Body of pancreas (tissue), 4 donors: ENCODE measurements at regions of chr2 and their contacts with region 1.

Region 1: DNA sequence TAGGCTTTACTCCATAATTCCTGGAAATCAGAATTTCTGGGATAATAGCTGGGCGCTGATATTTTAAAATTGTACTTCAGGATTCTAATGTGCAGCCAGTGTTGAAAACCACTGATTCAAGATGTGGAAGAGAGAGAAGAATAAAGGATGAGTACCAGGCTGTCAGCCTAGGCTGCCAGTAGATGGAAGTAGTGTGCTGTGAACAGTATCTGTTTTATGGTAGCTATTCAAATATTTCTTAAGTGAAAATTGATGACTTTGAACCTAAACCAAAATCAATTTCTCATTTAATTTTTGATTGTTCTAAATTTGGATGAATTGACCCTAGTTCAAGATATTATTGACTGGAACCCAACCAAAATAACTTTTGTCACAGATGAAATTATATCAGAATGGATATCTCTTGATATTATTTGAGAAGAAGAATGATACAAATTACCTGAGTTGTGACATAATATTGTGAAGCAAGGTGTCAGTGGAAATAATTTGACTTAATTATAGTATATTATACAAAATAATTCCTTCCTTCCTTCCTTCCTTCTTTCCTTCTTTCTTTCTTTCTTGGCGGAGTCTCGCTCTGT is 88.1 kb downstream of the COMMD1 start:
- DNase-seq: peak in 2 of 4 donors; percentile 29 to 41
- ATAC-seq: no peak
- H3K4me3 ChIP-seq: no peak overlapping the region
- H3K27ac ChIP-seq: no peak overlapping the region
- H3K4me1 ChIP-seq: no peaks in the 10 kb centered on the region
- H3K27me3 ChIP-seq: no peaks in the 10 kb centered on the region
- CTCF ChIP-seq: peak; percentile 15 to 64 (median 56)
- POLR2A ChIP-seq: no peak

Region 2: DNA sequence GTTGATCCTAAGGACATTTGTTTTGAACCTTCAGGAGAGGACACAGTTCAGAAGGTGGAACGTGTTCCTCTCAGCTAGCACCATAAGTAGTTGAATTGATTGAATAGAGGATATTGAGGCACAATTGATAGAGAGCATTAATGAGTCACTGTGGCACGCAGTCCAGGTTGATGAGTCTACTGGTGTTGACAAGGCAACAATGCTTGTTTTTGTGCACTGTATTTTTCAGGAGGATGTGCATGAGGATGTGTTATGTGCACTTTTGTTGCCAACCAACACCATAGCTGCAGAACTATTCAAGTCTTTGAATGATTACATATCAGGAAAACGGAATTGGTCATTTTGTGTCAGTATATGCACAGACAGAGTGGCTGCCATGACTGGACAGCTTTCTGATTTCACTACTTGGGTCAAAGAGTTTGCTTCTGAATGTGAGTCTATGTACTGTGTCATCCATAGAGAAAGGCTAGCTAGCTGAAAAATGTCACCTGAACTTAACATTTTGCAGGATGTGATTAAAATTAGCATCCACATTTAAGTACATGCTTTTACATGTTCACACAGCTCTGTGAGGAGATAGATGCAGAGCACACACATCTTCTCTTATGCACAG is 62.3 kb after region 1 on chr2:
- intact Hi-C with region 1: no loop called
- DNase-seq: no peak
- ATAC-seq: no peak
- H3K4me3 ChIP-seq: no peak overlapping the region
- H3K27ac ChIP-seq: no peak overlapping the region
- H3K4me1 ChIP-seq: no peaks in the 10 kb centered on the region
- H3K27me3 ChIP-seq: no peaks in the 10 kb centered on the region
- CTCF ChIP-seq: no peak
- POLR2A ChIP-seq: no peak

Region 3: GRCh38 chr2:62415019-62415431 is 421.5 kb after region 1 on chr2:
- intact Hi-C with region 1: loop called (anchors 10 kb)
- DNase-seq: peak in 1 of 4 donors; percentile 16
- ATAC-seq: no peak
- H3K4me3 ChIP-seq: no peak overlapping the region
- H3K27ac ChIP-seq: no peak overlapping the region
- H3K4me1 ChIP-seq: peaks cover 22% of the 10 kb centered on the region
- H3K27me3 ChIP-seq: no peaks in the 10 kb centered on the region
- CTCF ChIP-seq: no peak
- POLR2A ChIP-seq: no peak